ENCODE measurements at regions of chr3 and their contacts with region 1.

Region 1: GRCh38 chr3:184185461-184186308 is at the start of gene ABCF3:
- DNase-seq: peak; percentile 98 to 99
- H3K4me3 ChIP-seq: peak within 1 kb of the TSS; percentile 86 to 96 (median 94)
- H3K27ac ChIP-seq: peak within 1 kb of the TSS; percentile 92
- H3K4me1 ChIP-seq: peaks cover 0 to 8% (median 5%) of the 10 kb centered on the region in 4 experiments; a peak in 6 of 7 replicates
- H3K27me3 ChIP-seq: no peaks in the 10 kb centered on the region; a peak in 1 of 7 replicates
- CTCF ChIP-seq: no peak
- EP300 ChIP-seq: no peak
- POLR2A ChIP-seq: peak; percentile 90 to 94
- RAD21 ChIP-seq: no peak
- total RNA-seq, gene ABCF3: 50.9 and 51.6 TPM in 2 replicates

Region 2: GRCh38 chr3:184174646-184175492 is 10.8 kb before region 1 on chr3 and contains the start of gene AP2M1:
- CTCF ChIA-PET with region 1: interaction called, 16 read pairs
- POLR2A ChIA-PET with region 1: interaction called, 17 read pairs
- DNase-seq: peak; percentile 96 to 98
- H3K4me3 ChIP-seq: peak within 1 kb of the TSS; percentile 68 to 92 (median 86)
- H3K27ac ChIP-seq: peak within 1 kb of the TSS; percentile 87
- H3K4me1 ChIP-seq: peaks cover 0 to 23% (median 15%) of the 10 kb centered on the region in 4 experiments; a peak in 6 of 7 replicates
- H3K27me3 ChIP-seq: no peaks in the 10 kb centered on the region
- CTCF ChIP-seq: 0 out of 4 replicates have a peak, but pooled peaks of 1 of the 3 experiments have one; percentile 5
- EP300 ChIP-seq: no peak
- POLR2A ChIP-seq: peak in 1 of 2 experiments; percentile 71; a peak in 2 of 3 replicates
- RAD21 ChIP-seq: no peak
- total RNA-seq, gene AP2M1: 391 and 403 TPM in 2 replicates

Region 3: DNA sequence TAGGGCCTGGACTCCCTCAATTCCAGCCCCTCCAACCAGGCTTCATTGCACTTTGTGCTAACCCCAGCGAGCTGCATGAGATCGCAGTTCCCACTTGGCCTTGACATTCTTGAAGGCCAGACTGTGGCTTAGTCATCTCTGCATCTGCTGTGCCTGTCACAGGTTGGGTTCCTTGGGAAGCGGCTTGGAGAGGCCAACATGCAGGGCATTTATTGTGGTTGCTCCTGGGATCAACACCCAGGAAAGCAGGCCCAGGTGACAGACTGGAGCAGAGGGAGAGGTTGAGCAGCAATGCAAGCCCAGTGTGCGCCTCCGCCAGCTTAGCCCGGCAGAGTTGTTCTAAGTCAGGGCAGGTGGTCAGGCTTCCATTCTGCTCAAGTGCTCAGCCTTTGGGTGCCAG is 10.9 kb after region 1 on chr3:
- CTCF ChIA-PET with region 1: interaction called, 11 read pairs
- POLR2A ChIA-PET with region 1: interaction called, 18 read pairs
- DNase-seq: no peak
- H3K4me3 ChIP-seq: no peak overlapping the region
- H3K27ac ChIP-seq: no peak overlapping the region
- H3K4me1 ChIP-seq: no peaks in the 10 kb centered on the region
- H3K27me3 ChIP-seq: no peaks in the 10 kb centered on the region
- CTCF ChIP-seq: no peak
- EP300 ChIP-seq: no peak
- POLR2A ChIP-seq: no peak
- RAD21 ChIP-seq: no peak

Region 4: GRCh38 chr3:184332370-184333090 is 146.8 kb after region 1 on chr3:
- CTCF ChIA-PET with region 1: no interaction called
- POLR2A ChIA-PET with region 1: no interaction called
- DNase-seq: no peak
- H3K4me3 ChIP-seq: no peak overlapping the region
- H3K27ac ChIP-seq: peak overlapping the region; percentile 12; the same call in 1 of the 2 replicates
- H3K4me1 ChIP-seq: peaks cover 0 to 12% (median 9%) of the 10 kb centered on the region in 4 experiments; a peak in 6 of 7 replicates
- H3K27me3 ChIP-seq: no peaks in the 10 kb centered on the region
- CTCF ChIP-seq: no peak
- EP300 ChIP-seq: no peak
- POLR2A ChIP-seq: no peak
- RAD21 ChIP-seq: no peak